ENCODE measurements at regions of chr18 and their contacts with region 1.

Region 1: GRCh38 chr18:32919799-32920198 is 147.0 kb upstream of the KLHL14 start:
- DNase-seq: no peak
- ATAC-seq: peak in 1 of 8 donors; percentile 31
- H3K4me3 ChIP-seq: no peak overlapping the region
- H3K27ac ChIP-seq: no peak overlapping the region
- H3K4me1 ChIP-seq: peaks cover 0 to 4% (median 0%) of the 10 kb centered on the region in 9 donors
- H3K27me3 ChIP-seq: peaks cover 0 to 4% (median 0%) of the 10 kb centered on the region in 7 donors
- CTCF ChIP-seq: peak in 2 of 9 donors; percentile 30 to 34

Region 2: DNA sequence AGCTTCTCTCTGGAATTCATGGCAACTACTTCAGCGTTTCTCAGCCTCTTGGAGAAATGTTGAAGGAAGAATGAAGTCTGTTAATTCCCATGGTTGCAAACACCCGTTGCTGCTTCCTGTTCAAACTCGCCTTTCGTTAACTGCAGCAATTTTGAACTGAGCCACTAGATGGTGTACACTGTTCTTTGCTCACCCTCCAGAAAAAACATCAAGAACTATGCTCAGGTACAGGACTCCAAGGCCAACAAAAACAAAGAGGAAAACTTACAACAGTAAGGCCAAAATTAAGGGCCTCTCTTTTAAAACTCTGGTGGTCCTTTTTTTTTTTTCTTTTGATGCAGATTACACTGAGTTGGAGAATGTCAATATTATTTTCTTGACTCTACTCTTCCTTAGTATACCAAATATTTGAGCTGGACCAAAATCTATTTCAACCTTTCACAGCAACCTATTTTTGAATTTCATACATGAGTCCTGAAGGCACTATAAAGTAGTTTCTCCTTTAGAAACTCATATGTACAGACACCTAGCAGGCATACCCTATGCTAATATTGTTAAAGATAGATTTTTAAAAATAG is 205.1 kb before region 1 on chr18:
- intact Hi-C with region 1: loop called in 3 of 10 experiments (anchors 5 to 10 kb)
- DNase-seq: peak in 1 of 2 donors; percentile 33
- ATAC-seq: peak in 5 of 8 donors; percentile 37 to 65 (median 46)
- H3K4me3 ChIP-seq: no peak overlapping the region
- H3K27ac ChIP-seq: no peak overlapping the region
- H3K4me1 ChIP-seq: no peaks in the 10 kb centered on the region
- H3K27me3 ChIP-seq: no peaks in the 10 kb centered on the region
- CTCF ChIP-seq: peak; percentile 15 to 74 (median 64)

Region 3: DNA sequence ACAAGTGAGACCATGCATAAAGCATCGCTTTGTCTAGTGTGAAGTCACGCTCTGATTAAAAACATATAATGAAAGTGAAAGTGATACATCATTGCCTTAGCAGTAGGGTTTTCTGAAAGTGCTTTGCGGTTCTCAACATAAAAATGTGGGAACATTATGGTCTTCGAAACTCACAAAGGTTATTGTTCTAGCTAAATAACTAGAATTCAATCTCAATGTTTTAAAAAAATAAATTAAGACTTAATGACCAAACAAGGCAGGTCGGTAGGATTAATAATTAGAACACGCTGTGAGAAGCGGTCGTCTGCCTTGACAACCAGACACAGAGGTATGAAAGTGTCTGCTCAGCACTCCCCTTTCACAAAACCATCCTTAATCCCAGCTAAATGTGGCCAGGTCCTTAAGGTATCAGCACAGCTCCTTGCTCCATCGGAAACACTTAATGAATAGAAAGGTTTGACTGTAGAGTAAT is 189.1 kb before region 1 on chr18:
- intact Hi-C with region 1: loop called in 1 of 10 experiments (anchors 10 kb)
- DNase-seq: no peak
- ATAC-seq: no peak
- H3K4me3 ChIP-seq: peak overlapping the region in 6 of 10 donors; percentile 19 to 45 (median 31)
- H3K27ac ChIP-seq: peak overlapping the region in 1 of 10 donors; percentile 37
- H3K4me1 ChIP-seq: no peaks in the 10 kb centered on the region
- H3K27me3 ChIP-seq: no peaks in the 10 kb centered on the region
- CTCF ChIP-seq: no peak

Region 4: GRCh38 chr18:32868406-32868805 is 51.4 kb before region 1 on chr18:
- intact Hi-C with region 1: no loop called
- DNase-seq: no peak
- ATAC-seq: no peak
- H3K4me3 ChIP-seq: no peak overlapping the region
- H3K27ac ChIP-seq: no peak overlapping the region
- H3K4me1 ChIP-seq: no peaks in the 10 kb centered on the region
- H3K27me3 ChIP-seq: peaks cover 0 to 10% (median 0%) of the 10 kb centered on the region in 7 donors
- CTCF ChIP-seq: no peak

Region 5: GRCh38 chr18:32974421-32975162 is 54.8 kb after region 1 on chr18:
- intact Hi-C with region 1: loop called in 1 of 10 experiments (anchors 10 kb)
- DNase-seq: no peak
- ATAC-seq: no peak
- H3K4me3 ChIP-seq: no peak overlapping the region
- H3K27ac ChIP-seq: no peak overlapping the region
- H3K4me1 ChIP-seq: no peaks in the 10 kb centered on the region
- H3K27me3 ChIP-seq: no peaks in the 10 kb centered on the region
- CTCF ChIP-seq: no peak

Region 6: DNA sequence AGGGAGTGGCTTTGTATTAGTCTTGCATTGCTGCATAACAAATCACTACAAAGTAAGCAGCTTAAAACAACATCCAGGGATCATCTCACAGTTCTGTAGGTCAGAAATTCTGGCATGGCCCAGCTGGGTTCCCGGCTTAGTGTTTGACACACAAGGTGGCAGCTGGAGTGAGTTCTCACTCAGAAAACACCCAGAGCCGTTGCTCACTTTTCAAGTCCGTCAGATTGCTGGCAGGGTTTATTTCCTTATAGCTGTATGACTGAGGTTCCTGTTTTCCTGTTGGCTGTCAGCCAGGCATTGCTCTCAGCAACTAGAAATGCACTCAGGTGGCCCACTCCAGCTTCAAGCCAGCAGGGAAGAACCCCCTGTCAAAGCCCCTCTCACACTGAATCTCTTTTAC is 196.6 kb after region 1 on chr18:
- intact Hi-C with region 1: no loop called
- DNase-seq: no peak
- ATAC-seq: no peak
- H3K4me3 ChIP-seq: no peak overlapping the region
- H3K27ac ChIP-seq: no peak overlapping the region
- H3K4me1 ChIP-seq: no peaks in the 10 kb centered on the region
- H3K27me3 ChIP-seq: no peaks in the 10 kb centered on the region
- CTCF ChIP-seq: no peak

Measured in heart right ventricle (tissue), 16 donors.